Heart left ventricle (tissue), 16 donors: ENCODE measurements at regions of chr17 and their contacts with region 1.

Region 1: GRCh38 chr17:42112552-42113176 is at the start of gene DHX58:
- DNase-seq: peak; percentile 71 to 82 (median 76)
- ATAC-seq: peak; percentile 61 to 90 (median 84)
- H3K4me3 ChIP-seq: peak within 1 kb of the TSS; percentile 42 to 82 (median 62)
- H3K27ac ChIP-seq: peak within 1 kb of the TSS; percentile 66 to 93 (median 90)
- H3K4me1 ChIP-seq: peaks cover 0 to 33% (median 16%) of the 10 kb centered on the region in 12 donors
- H3K27me3 ChIP-seq: no peaks in the 10 kb centered on the region
- CTCF ChIP-seq: no peak
- POLR2A ChIP-seq: peak in 1 of 2 donors; percentile 56
- total RNA-seq, gene DHX58: 1.9 to 17.3 (median 3.7) TPM

Region 2: DNA sequence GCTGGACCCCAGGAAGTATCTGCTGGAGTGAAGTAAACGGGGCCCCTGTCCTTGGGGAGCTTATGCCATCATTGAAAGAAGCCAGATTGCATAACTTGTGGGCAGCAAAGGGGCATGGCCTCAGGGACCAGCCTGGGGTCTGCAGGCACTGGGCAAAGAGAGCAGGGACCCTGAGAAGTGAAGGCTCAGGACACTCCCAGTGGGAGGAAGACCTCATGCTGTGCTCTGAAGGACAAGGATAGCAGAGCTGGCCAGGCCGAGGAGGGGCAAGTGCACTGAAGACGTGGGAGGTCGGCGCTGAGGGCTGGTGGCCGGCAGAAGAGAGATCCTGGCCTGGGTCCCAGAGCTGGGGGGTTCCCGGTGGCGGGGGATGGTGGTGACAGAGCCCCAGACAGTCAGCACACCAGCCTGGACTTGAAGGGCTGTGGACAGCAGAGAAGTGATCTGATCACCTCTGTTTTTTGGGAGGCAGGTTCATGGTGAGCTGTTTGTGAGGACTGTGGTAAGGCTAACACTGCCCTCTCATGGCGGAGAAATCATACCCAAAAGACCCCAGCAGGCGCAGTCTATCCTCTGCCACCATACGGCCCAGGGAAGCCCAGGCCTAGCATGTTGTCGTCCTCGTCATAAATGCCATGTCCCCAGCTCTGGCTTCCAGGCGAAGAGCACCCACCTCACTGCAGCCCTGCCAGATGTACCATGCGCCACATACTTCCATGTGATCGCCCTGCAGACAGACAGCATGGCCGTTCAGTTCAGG is 153.1 kb before region 1 on chr17:
- intact Hi-C with region 1: loop called in 8 of 10 experiments (anchors 1 to 5 kb)
- DNase-seq: peak in 1 of 5 donors; percentile 26
- ATAC-seq: peak; percentile 28 to 59 (median 40)
- H3K4me3 ChIP-seq: no peak overlapping the region
- H3K27ac ChIP-seq: no peak overlapping the region
- H3K4me1 ChIP-seq: peaks cover 0 to 8% (median 5%) of the 10 kb centered on the region in 12 donors
- H3K27me3 ChIP-seq: no peaks in the 10 kb centered on the region
- CTCF ChIP-seq: peak in 8 of 12 donors; percentile 11 to 41 (median 34)
- POLR2A ChIP-seq: no peak

Region 3: GRCh38 chr17:41966463-41967140 is 146.1 kb before region 1 on chr17 and contains the start of gene CNP:
- intact Hi-C with region 1: loop called (anchors 1 to 5 kb)
- DNase-seq: peak; percentile 93 to 96 (median 94)
- ATAC-seq: peak; percentile 90 to 95 (median 94)
- H3K4me3 ChIP-seq: peak within 1 kb of the TSS; percentile 64 to 100 (median 90)
- H3K27ac ChIP-seq: peak within 1 kb of the TSS; percentile 59 to 94 (median 86)
- H3K4me1 ChIP-seq: peaks cover 0 to 42% (median 24%) of the 10 kb centered on the region in 12 donors
- H3K27me3 ChIP-seq: no peaks in the 10 kb centered on the region
- CTCF ChIP-seq: no peak
- POLR2A ChIP-seq: peak in 1 of 2 donors; percentile 91
- total RNA-seq, gene CNP: 23.3 to 49.1 (median 27.5) TPM

Region 4: DNA sequence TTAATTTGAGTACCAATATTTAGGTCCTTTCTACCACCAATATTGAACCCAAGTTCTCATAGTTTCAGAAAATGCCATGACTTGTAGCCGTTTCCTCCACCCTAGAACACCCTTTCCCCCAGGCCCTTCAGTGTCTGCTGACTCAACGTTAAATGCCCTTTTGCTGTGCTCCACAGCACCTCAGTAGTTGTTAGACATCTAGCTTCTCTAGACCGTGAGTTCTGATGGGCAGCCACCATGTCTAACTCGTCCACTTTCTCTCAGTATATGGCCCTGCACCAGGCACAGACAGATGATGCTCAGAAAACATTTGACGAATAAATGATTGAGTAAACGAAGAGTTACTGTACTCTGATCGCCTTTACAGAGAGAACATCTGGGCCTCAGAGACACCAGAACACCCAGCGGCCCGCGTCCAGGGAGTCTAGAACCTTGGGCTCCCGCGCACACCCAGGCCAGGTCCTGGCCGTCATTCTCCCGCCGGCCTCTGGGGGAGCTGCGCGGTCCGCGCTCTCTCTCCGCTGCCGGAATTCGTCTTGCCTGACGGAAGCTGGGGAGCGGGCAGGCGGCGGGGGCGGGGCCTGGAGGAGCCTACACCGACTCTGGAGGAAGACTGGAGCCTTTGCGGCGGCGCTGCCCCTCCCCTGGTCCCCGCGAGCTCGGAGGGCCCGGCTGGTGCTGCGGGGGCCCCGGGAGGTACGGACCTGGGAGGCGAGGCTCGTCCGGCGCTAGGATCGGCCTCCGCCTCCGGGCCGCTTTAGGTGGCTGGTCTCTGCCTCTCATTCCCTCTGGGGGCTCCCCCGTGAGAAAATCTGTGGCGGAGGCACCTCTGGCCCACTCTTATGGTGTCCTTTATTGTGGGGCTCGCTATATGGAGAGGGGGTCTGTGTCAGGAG is 92.9 kb before region 1 on chr17 and contains the start of gene NKIRAS2:
- intact Hi-C with region 1: loop called in 4 of 10 experiments (anchors 2 kb)
- DNase-seq: peak; percentile 95 to 98 (median 97)
- ATAC-seq: peak; percentile 68 to 81 (median 76)
- H3K4me3 ChIP-seq: peak within 1 kb of the TSS; percentile 51 to 98 (median 79)
- H3K27ac ChIP-seq: peak within 1 kb of the TSS; percentile 63 to 91 (median 86)
- H3K4me1 ChIP-seq: peaks cover 6 to 71% (median 45%) of the 10 kb centered on the region in 12 donors
- H3K27me3 ChIP-seq: no peaks in the 10 kb centered on the region
- CTCF ChIP-seq: peak; percentile 77 to 99 (median 96)
- POLR2A ChIP-seq: peak in 1 of 2 donors; percentile 62
- total RNA-seq, gene NKIRAS2: 50.6 to 78.9 (median 52.8) TPM

Region 5: GRCh38 chr17:42027961-42028790 is 84.5 kb before region 1 on chr17:
- intact Hi-C with region 1: loop called (anchors 1 to 5 kb)
- DNase-seq: no peak
- ATAC-seq: no peak
- H3K4me3 ChIP-seq: no peak overlapping the region
- H3K27ac ChIP-seq: no peak overlapping the region
- H3K4me1 ChIP-seq: peaks cover 0 to 30% (median 14%) of the 10 kb centered on the region in 12 donors
- H3K27me3 ChIP-seq: peaks cover 0 to 9% (median 0%) of the 10 kb centered on the region in 9 donors
- CTCF ChIP-seq: peak in 2 of 12 donors; percentile 10 to 12
- POLR2A ChIP-seq: no peak

Region 6: GRCh38 chr17:42067351-42068091 is 45.1 kb before region 1 on chr17:
- intact Hi-C with region 1: loop called in 8 of 10 experiments (anchors 2 to 10 kb)
- DNase-seq: peak; percentile 28 to 73 (median 51)
- ATAC-seq: peak in 2 of 4 donors; percentile 40 to 46
- H3K4me3 ChIP-seq: no peak overlapping the region
- H3K27ac ChIP-seq: no peak overlapping the region
- H3K4me1 ChIP-seq: peaks cover 0 to 18% (median 7%) of the 10 kb centered on the region in 12 donors
- H3K27me3 ChIP-seq: peaks cover 0 to 22% (median 13%) of the 10 kb centered on the region in 9 donors
- CTCF ChIP-seq: peak; percentile 75 to 94 (median 87)
- POLR2A ChIP-seq: no peak

Region 7: DNA sequence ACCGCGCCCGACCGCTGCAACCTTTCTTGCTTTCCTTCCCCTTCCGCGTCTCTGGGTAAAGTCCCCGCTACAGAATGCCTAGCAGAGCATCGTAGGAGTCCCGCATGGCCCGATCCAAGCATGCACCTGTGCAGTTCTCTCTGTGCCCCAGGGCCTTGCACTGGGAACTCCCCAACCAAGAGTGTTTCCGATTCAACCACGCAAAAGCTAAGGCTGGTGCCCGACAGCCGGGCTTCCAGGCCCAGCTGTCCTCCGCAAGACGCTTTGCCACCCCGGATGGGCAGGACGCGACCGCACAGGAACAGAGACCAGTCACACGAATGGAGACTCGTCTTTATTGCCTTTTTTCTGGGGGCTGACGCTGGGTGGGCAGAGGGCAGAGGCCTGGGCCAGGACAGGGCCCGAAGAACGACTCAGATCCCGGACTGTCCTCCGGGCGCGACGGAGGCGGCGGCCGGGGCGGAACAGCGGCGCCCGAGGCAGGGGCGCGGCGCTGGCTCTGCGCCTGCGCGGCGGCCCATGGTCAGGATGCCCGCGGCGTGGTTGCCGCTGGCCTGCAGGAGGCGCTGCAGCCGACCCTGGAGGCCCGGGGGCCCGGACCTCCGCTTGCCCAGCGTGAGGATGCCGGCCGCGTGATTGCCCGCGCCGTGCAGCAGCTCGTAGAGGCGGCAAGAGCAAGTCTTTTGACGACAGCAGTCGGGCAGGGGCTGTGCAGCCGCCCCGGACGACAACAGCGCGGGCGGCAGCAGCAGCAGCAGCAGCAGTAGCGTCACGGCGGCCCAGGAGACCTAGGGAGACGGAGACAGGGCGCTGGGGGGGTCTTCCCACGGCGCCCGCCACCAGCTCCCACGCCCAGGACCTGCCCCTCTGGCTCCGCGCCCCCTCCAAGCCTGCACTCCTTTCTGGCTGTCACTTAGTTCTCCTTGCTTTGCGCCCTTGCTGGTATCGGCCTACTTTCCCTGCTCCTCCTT is 71.4 kb after region 1 on chr17:
- intact Hi-C with region 1: loop called in 3 of 10 experiments (anchors 2 to 5 kb)
- DNase-seq: peak; percentile 67 to 92 (median 80)
- ATAC-seq: peak; percentile 41 to 89 (median 82)
- H3K4me3 ChIP-seq: peak overlapping the region; percentile 27 to 72 (median 61)
- H3K27ac ChIP-seq: peak overlapping the region in 11 of 12 donors; percentile 67 to 88 (median 80)
- H3K4me1 ChIP-seq: peaks cover 0 to 53% (median 27%) of the 10 kb centered on the region in 12 donors
- H3K27me3 ChIP-seq: peaks cover 0 to 28% (median 14%) of the 10 kb centered on the region in 9 donors
- CTCF ChIP-seq: peak; percentile 66 to 98 (median 88)
- POLR2A ChIP-seq: peak in 1 of 2 donors; percentile 65